Heart right ventricle (tissue), 16 donors: ENCODE measurements at regions of chr11 and their contacts with region 1.

Region 1: DNA sequence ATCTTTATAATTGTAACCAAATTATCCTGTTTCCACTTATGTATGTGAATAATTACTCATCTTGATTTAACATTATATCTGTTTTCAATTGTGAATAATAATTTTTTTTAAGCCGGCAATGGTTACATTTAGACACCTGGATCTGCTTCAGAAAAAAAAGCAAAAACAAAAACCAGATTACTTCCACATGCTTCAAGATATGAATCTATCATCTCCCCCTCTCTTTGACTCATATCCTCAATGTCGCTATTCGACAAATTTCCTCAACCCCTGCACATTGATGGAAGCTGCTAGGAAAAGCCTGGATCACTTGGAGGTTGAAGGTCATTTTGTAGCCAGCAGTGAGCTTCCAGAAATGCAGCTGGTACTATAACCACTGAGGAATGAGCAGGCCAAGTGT is 42.7 kb downstream of the SLC1A2 start:
- DNase-seq: no peak
- ATAC-seq: no peak
- H3K4me3 ChIP-seq: no peak overlapping the region
- H3K27ac ChIP-seq: no peak overlapping the region
- H3K4me1 ChIP-seq: peaks cover 0 to 29% (median 12%) of the 10 kb centered on the region in 9 donors
- H3K27me3 ChIP-seq: no peaks in the 10 kb centered on the region
- CTCF ChIP-seq: no peak

Region 2: DNA sequence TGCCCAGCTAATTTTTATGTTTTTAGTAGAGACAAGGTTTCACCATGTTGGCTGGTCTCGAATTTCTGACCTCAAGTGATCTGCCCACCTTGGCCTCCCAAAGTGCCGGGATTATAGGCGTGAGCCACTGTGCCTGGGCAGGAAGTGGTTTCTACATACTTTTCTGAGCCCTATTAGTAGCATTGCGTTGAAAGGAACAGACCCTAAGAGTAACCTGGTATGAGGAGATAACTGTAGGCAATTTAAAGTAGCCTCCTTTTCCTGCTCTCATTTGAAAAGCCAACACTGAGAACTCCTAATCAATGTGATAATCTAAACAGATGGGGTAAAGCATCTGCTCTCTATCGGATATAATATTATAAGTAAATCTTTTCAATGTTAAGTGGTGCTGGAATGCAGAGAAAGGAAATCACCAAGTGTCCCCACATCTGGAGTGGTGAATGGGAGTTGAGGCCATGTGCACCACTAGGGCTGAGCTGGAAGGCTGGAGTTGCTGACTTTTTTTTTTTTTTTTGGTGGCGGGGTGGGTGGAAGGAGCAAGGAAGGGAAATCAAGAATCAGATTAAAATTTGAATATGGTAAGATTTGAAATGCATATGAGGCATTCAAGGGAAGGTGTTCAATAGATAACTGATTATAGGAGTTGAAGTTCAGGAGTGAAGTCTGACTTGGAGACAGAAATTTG is 439.5 kb before region 1 on chr11:
- intact Hi-C with region 1: loop called in 1 of 10 experiments (anchors 5 kb)
- DNase-seq: no peak
- ATAC-seq: no peak
- H3K4me3 ChIP-seq: no peak overlapping the region
- H3K27ac ChIP-seq: no peak overlapping the region
- H3K4me1 ChIP-seq: peaks cover 0 to 26% (median 6%) of the 10 kb centered on the region in 9 donors
- H3K27me3 ChIP-seq: no peaks in the 10 kb centered on the region
- CTCF ChIP-seq: no peak